Prostate gland (tissue), 2 donors: ENCODE measurements at regions of chr5 and their contacts with region 1.

Region 1: DNA sequence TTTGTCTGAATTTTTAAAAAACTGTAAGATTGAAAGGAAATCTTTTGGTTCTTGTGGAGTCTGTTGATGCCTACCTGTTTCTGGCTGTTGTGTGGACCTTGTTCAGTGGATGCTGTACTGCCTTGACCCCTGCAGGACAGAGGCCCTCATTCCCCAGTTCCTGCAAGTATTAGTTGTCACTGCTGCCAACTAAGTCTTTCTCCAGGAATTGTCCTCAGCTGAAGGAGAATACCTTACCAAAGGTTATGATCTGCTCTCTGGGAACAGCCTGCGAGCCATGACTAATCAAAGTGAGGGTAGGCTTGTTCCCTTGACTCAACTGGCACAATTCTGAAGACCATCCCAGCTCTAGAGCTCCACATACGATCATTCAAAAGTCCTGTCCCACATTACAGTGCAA is 145.3 kb upstream of the FST start:
- DNase-seq: no peak
- H3K4me3 ChIP-seq: no peak overlapping the region
- H3K27ac ChIP-seq: no peak overlapping the region
- H3K4me1 ChIP-seq: peaks cover 2% of the 10 kb centered on the region
- H3K27me3 ChIP-seq: no peaks in the 10 kb centered on the region
- CTCF ChIP-seq: no peak
- POLR2A ChIP-seq: no peak

Region 2: DNA sequence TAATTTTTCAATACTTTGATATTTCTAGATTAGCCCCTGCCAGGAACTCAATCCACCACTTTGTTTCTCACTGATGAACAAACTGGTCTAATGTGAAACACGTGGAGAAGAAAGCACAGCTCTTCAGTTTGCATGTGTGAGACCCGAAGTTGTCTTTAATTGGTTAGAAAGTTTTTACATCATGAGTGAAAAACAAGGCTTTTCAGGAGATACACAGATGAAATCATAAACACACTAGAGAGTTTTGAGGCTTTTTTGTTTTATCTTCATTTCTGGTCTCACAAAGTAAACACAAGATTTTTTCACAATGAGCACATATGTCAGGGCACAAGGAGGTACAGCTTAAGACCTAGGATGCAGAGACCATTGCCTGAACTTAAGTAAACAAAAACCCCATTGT is 141.0 kb before region 1 on chr5:
- intact Hi-C with region 1: no loop called
- DNase-seq: no peak
- H3K4me3 ChIP-seq: no peak overlapping the region
- H3K27ac ChIP-seq: no peak overlapping the region
- H3K4me1 ChIP-seq: no peaks in the 10 kb centered on the region
- H3K27me3 ChIP-seq: no peaks in the 10 kb centered on the region
- CTCF ChIP-seq: no peak
- POLR2A ChIP-seq: no peak

Region 3: GRCh38 chr5:53249529-53250200 is 85.5 kb before region 1 on chr5:
- intact Hi-C with region 1: no loop called
- DNase-seq: no peak
- H3K4me3 ChIP-seq: no peak overlapping the region
- H3K27ac ChIP-seq: no peak overlapping the region
- H3K4me1 ChIP-seq: no peaks in the 10 kb centered on the region
- H3K27me3 ChIP-seq: no peaks in the 10 kb centered on the region
- CTCF ChIP-seq: no peak
- POLR2A ChIP-seq: no peak

Region 4: DNA sequence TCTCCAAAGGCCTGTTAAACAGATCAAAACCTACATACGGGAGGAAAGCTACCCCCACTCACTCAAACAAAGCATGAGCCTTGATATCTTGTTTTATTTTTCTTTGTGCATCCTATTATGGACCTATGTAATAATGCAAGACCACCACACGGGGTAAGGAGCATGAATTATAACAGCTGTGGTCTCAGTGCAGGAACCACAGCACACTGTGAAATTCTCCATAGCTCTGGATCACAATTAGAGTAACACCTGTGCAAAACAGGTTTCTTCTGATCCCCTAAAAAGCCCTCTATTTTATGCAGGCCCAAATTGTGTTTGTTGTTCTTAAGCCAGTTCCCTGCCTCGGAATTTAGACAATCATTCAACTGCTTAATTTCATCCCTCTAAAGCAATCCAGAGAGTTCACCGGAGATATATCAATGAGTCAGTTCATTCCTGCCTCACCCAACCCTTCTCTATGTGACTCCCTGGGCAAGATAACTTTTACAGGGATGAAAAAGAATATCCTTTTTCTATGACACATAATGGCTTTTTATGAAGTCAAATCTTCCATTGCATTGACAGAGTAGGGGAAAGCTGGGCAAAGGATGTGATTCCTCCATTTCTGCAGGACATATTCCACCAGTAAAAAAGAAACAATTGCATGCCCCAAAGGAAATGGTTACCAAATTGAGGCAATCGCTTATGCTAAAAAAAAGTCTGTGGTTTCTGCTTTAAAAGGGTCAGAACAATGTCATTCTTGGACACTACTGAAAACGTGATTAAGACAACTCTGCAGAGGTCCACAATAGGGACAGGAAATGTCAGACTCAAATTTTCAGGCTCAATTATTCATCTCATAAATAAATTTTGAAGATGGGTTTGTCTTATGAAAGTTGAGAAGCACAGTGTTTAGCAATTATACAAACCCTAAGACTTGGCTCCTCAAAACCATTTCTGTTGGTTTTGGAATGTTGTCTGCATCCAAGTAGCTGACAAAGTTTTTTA is 103.7 kb after region 1 on chr5:
- intact Hi-C with region 1: loop called (anchors 5 kb)
- DNase-seq: no peak
- H3K4me3 ChIP-seq: no peak overlapping the region
- H3K27ac ChIP-seq: no peak overlapping the region
- H3K4me1 ChIP-seq: no peaks in the 10 kb centered on the region
- H3K27me3 ChIP-seq: no peaks in the 10 kb centered on the region
- CTCF ChIP-seq: no peak
- POLR2A ChIP-seq: no peak

Region 5: GRCh38 chr5:53568871-53569270 is 233.8 kb after region 1 on chr5:
- intact Hi-C with region 1: no loop called
- DNase-seq: no peak
- H3K4me3 ChIP-seq: no peak overlapping the region
- H3K27ac ChIP-seq: no peak overlapping the region
- H3K4me1 ChIP-seq: no peaks in the 10 kb centered on the region
- H3K27me3 ChIP-seq: no peaks in the 10 kb centered on the region
- CTCF ChIP-seq: no peak
- POLR2A ChIP-seq: no peak